CD8-positive, alpha-beta T cell (primary cell): ENCODE measurements at regions of chr4 and their contacts with region 1.

Region 1: GRCh38 chr4:132839070-132839469 is 310.0 kb upstream of the PCDH10 start:
- DNase-seq: no peak
- ATAC-seq: no peak
- H3K4me3 ChIP-seq: no peak overlapping the region
- H3K4me3 Mint-ChIP-seq: no peak overlapping the region
- H3K27ac ChIP-seq: no peak overlapping the region
- H3K27ac Mint-ChIP-seq: no peak overlapping the region
- H3K4me1 ChIP-seq: no peaks in the 10 kb centered on the region
- H3K4me1 Mint-ChIP-seq: no peaks in the 10 kb centered on the region
- H3K27me3 ChIP-seq: no peaks in the 10 kb centered on the region
- H3K27me3 Mint-ChIP-seq: no peaks in the 10 kb centered on the region
- CTCF ChIP-seq: no peak

Region 2: DNA sequence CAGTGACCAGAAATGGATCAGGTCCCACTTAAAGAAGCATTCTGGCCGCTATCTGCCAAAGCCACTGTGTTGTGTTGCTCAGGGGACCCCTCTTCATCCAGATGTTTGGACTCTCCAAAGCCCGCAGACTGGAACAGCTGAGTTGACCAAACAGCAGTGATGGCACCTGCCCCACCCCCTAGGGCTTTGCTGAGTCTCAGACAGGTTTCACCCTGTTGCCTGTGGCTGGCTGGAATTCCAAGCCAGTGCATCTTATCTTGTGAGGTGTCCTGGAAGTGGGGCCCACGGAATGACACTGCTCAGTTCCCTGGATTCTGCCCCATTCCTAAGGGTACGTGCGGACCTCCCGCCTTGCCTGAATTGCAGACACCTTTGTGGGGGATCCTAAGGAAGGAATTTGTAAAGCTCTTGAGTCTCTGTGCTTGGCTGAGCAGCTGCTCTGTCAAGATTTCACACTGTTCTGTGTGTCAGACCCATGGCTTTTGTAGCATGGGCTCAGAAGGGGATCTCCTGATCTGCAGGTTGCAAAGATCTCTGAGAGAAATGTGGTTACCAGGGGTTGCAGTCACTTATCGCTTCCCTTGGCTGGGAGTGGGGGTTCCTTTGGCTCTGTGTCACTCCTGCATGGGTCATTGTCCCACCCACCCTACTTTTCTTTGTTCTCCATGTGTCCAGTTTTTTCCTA is 1397.9 kb before region 1 on chr4:
- CTCF ChIA-PET with region 1: no interaction called
- POLR2A ChIA-PET with region 1: no interaction called
- intact Hi-C with region 1: no loop called
- DNase-seq: no peak
- ATAC-seq: no peak
- H3K4me3 ChIP-seq: no peak overlapping the region
- H3K4me3 Mint-ChIP-seq: no peak overlapping the region
- H3K27ac ChIP-seq: no peak overlapping the region
- H3K27ac Mint-ChIP-seq: no peak overlapping the region
- H3K4me1 ChIP-seq: no peaks in the 10 kb centered on the region
- H3K4me1 Mint-ChIP-seq: no peaks in the 10 kb centered on the region
- H3K27me3 ChIP-seq: no peaks in the 10 kb centered on the region
- H3K27me3 Mint-ChIP-seq: no peaks in the 10 kb centered on the region
- CTCF ChIP-seq: no peak

Region 3: GRCh38 chr4:132646186-132646585 is 192.9 kb before region 1 on chr4:
- CTCF ChIA-PET with region 1: no interaction called
- POLR2A ChIA-PET with region 1: no interaction called
- intact Hi-C with region 1: no loop called
- DNase-seq: no peak
- ATAC-seq: no peak
- H3K4me3 ChIP-seq: no peak overlapping the region
- H3K4me3 Mint-ChIP-seq: no peak overlapping the region
- H3K27ac ChIP-seq: no peak overlapping the region
- H3K27ac Mint-ChIP-seq: no peak overlapping the region
- H3K4me1 ChIP-seq: no peaks in the 10 kb centered on the region
- H3K4me1 Mint-ChIP-seq: no peaks in the 10 kb centered on the region
- H3K27me3 ChIP-seq: no peaks in the 10 kb centered on the region
- H3K27me3 Mint-ChIP-seq: no peaks in the 10 kb centered on the region
- CTCF ChIP-seq: no peak

Region 4: GRCh38 chr4:132827522-132827921 is 11.5 kb before region 1 on chr4:
- CTCF ChIA-PET with region 1: no interaction called
- POLR2A ChIA-PET with region 1: no interaction called
- intact Hi-C with region 1: loop called in 1 of 2 experiments (anchors 1 kb)
- DNase-seq: no peak
- ATAC-seq: no peak
- H3K4me3 ChIP-seq: no peak overlapping the region
- H3K4me3 Mint-ChIP-seq: no peak overlapping the region
- H3K27ac ChIP-seq: no peak overlapping the region
- H3K27ac Mint-ChIP-seq: no peak overlapping the region
- H3K4me1 ChIP-seq: no peaks in the 10 kb centered on the region
- H3K4me1 Mint-ChIP-seq: no peaks in the 10 kb centered on the region
- H3K27me3 ChIP-seq: no peaks in the 10 kb centered on the region
- H3K27me3 Mint-ChIP-seq: no peaks in the 10 kb centered on the region
- CTCF ChIP-seq: no peak